ENCODE measurements at regions of chr15 and their contacts with region 1.

Region 1: DNA sequence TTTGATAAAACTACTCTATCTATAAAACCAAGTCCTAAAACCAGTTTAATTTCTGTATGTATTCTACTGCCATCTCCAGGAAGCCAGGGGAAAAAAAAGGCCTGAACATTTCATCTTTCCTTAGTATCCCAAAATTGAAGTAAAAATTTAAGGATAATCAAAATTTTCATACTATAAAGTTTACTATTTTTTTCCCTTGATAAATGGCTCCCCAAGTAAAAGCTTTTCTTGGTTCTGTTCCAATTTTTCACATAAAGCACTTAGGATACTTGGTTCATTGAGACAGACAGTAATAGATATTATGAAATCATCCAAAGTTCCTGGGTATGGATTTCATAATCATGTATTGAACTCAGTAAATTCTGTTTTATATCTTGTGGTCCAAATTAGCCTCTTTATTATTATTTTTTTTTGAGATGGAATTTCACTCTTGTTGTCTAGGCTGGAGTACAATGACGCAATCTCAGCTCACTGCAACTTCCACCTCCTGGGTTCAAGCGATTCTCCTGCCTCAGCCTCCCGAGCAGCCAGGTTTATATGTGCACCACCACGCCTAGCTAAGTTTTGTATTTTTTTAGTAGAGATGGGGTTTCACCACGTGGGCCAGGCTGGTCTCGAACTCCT is 34.5 kb downstream of the ICE2 start:
- DNase-seq: no peak
- H3K4me3 ChIP-seq: no peak overlapping the region
- H3K27ac ChIP-seq: no peak overlapping the region
- H3K4me1 ChIP-seq: no peaks in the 10 kb centered on the region
- H3K27me3 ChIP-seq: no peaks in the 10 kb centered on the region
- CTCF ChIP-seq: peak; percentile 60

Region 2: GRCh38 chr15:60062826-60063225 is 381.6 kb before region 1 on chr15:
- CTCF ChIA-PET with region 1: no interaction called
- POLR2A ChIA-PET with region 1: no interaction called
- intact Hi-C with region 1: no loop called
- DNase-seq: no peak
- H3K4me3 ChIP-seq: no peak overlapping the region
- H3K27ac ChIP-seq: no peak overlapping the region
- H3K4me1 ChIP-seq: no peaks in the 10 kb centered on the region
- H3K27me3 ChIP-seq: no peaks in the 10 kb centered on the region
- CTCF ChIP-seq: no peak

Region 3: GRCh38 chr15:60362321-60363086 is 81.9 kb before region 1 on chr15:
- CTCF ChIA-PET with region 1: interaction called, 6 read pairs
- POLR2A ChIA-PET with region 1: interaction called, 4 read pairs
- intact Hi-C with region 1: loop called (anchors 5 kb)
- DNase-seq: peak; percentile 53 to 83
- H3K4me3 ChIP-seq: no peak overlapping the region
- H3K27ac ChIP-seq: peak overlapping the region; percentile 76
- H3K4me1 ChIP-seq: peaks cover 24% of the 10 kb centered on the region
- H3K27me3 ChIP-seq: no peaks in the 10 kb centered on the region
- CTCF ChIP-seq: no peak

Region 4: DNA sequence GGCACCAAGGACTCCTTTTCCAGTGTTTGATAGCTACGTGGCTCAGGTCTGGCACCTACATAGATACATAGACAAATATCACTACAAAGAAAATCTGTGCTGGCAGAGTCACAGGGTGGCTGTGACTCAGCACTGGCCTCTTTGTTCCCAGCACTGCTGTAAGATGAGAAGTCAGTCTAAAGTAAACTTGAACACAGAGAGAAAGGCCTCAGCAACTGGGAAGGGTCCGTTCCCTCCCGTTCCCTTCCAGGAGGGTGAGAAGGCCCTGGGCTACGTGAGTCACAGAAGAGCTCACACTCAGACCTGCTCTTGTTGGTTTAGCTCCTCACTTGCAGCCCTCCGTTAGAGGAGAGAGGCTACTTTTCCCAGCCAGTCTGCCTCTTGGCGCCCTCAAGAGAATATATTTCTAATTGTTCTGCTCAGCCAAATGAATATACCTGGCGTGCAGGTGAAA is 69.7 kb before region 1 on chr15:
- CTCF ChIA-PET with region 1: interaction called, 3 read pairs
- POLR2A ChIA-PET with region 1: no interaction called
- intact Hi-C with region 1: loop called (anchors 5 kb)
- DNase-seq: peak; percentile 90 to 93
- H3K4me3 ChIP-seq: no peak overlapping the region
- H3K27ac ChIP-seq: peak overlapping the region; percentile 97
- H3K4me1 ChIP-seq: peaks cover 56% of the 10 kb centered on the region
- H3K27me3 ChIP-seq: no peaks in the 10 kb centered on the region
- CTCF ChIP-seq: no peak

Region 5: GRCh38 chr15:60389261-60390077 is 54.9 kb before region 1 on chr15:
- CTCF ChIA-PET with region 1: interaction called, 3 read pairs
- POLR2A ChIA-PET with region 1: interaction called, 14 read pairs
- intact Hi-C with region 1: loop called (anchors 1 kb)
- DNase-seq: no peak
- H3K4me3 ChIP-seq: no peak overlapping the region
- H3K27ac ChIP-seq: no peak overlapping the region; the same call in 1 of the 2 replicates
- H3K4me1 ChIP-seq: peaks cover 50% of the 10 kb centered on the region
- H3K27me3 ChIP-seq: no peaks in the 10 kb centered on the region
- CTCF ChIP-seq: no peak

Region 6: GRCh38 chr15:60423537-60423936 is 20.9 kb before region 1 on chr15:
- CTCF ChIA-PET with region 1: no interaction called
- POLR2A ChIA-PET with region 1: interaction called, 10 read pairs
- intact Hi-C with region 1: loop called (anchors 2 kb)
- DNase-seq: peak; percentile 60 to 84
- H3K4me3 ChIP-seq: no peak overlapping the region
- H3K27ac ChIP-seq: peak overlapping the region; percentile 55
- H3K4me1 ChIP-seq: peaks cover 20% of the 10 kb centered on the region
- H3K27me3 ChIP-seq: no peaks in the 10 kb centered on the region
- CTCF ChIP-seq: no peak

Region 7: DNA sequence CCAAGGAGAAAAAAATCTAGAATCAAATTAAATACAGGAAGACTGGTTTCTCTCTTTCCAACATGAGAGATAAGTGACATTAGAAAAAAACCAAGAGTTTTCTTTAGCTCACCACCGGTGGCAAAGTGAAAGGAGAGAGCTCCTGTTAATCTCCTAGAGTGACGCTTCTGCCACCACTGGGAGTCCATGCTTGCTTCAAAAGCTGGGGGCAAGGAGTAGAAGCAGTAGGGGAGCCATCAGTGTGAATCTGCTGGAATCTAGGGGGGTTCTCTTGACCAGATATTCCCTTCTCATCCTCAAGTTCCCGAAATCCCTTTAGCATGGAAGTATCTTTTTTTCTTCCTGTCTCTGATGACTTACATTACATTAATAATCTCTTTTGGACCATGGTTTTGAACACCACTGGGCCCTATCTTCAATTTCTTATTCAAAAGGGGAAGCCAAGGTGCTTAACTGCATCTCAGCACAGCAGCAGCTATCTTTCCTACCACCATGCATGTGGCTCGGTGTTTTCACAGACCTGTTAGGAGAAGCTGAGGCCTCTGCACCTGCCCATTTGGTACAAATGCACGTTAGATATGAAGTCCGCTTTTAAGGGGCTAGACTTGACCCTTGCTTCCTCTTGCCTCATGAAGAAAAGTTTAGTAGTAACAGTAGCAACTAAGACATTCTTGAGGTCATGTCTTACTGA is 41.1 kb after region 1 on chr15:
- CTCF ChIA-PET with region 1: no interaction called
- POLR2A ChIA-PET with region 1: no interaction called
- intact Hi-C with region 1: no loop called
- DNase-seq: no peak
- H3K4me3 ChIP-seq: no peak overlapping the region
- H3K27ac ChIP-seq: no peak overlapping the region
- H3K4me1 ChIP-seq: peaks cover 11% of the 10 kb centered on the region
- H3K27me3 ChIP-seq: no peaks in the 10 kb centered on the region
- CTCF ChIP-seq: no peak